Activated CD4-positive, alpha-beta T cell treated with anti-CD3 and anti-CD28 coated beads for 36 hours (primary cell): ENCODE measurements at regions of chr14 and their contacts with region 1.

Region 1: GRCh38 chr14:63650256-63650952 is 8.7 kb upstream of the WDR89 start:
- DNase-seq: peak; percentile 75
- ATAC-seq: peak; percentile 91
- H3K4me3 Mint-ChIP-seq: peak overlapping the region; percentile 46
- H3K27ac Mint-ChIP-seq: peak overlapping the region; percentile 99
- H3K4me1 Mint-ChIP-seq: peaks cover 49% of the 10 kb centered on the region
- H3K27me3 Mint-ChIP-seq: no peaks in the 10 kb centered on the region

Region 2: GRCh38 chr14:63713765-63714164 is 63.4 kb after region 1 on chr14:
- CTCF ChIA-PET with region 1: interaction called, 4 read pairs
- POLR2A ChIA-PET with region 1: no interaction called
- intact Hi-C with region 1: loop called in 1 of 2 experiments (anchors 2 kb)
- DNase-seq: no peak
- ATAC-seq: no peak
- H3K4me3 Mint-ChIP-seq: no peak overlapping the region
- H3K27ac Mint-ChIP-seq: no peak overlapping the region
- H3K4me1 Mint-ChIP-seq: peaks cover 34% of the 10 kb centered on the region
- H3K27me3 Mint-ChIP-seq: no peaks in the 10 kb centered on the region